Breast epithelium (tissue), 4 donors: ENCODE measurements at regions of chr17 and their contacts with region 1.

Region 1: DNA sequence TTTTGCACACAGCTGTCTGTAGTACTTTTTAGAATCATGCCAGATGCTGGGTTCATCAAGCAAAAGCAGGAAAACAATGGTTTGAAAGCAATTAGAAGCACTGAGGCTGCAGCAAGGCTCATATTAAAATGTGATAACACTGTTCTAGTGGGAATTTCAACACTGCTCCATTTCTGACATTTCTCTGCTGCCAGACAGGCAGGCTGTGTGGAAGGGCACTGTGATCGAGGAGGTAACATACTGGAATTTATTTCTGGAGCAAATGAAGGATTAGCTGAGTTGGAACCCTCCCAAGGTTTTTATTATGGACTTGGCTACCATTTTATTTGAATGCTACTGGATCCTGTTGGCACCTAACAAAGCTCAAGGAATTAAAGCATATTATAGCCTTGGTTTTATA is 66.9 kb downstream of the SKAP1 start:
- DNase-seq: no peak
- H3K4me3 ChIP-seq: no peak overlapping the region
- H3K27ac ChIP-seq: no peak overlapping the region
- H3K4me1 ChIP-seq: no peaks in the 10 kb centered on the region
- H3K27me3 ChIP-seq: peaks cover 0 to 18% of the 10 kb centered on the region in 2 donors
- CTCF ChIP-seq: no peak
- POLR2A ChIP-seq: no peak

Region 2: GRCh38 chr17:48374650-48375230 is 11.6 kb after region 1 on chr17:
- intact Hi-C with region 1: no loop called
- DNase-seq: no peak
- H3K4me3 ChIP-seq: no peak overlapping the region
- H3K27ac ChIP-seq: no peak overlapping the region
- H3K4me1 ChIP-seq: no peaks in the 10 kb centered on the region
- H3K27me3 ChIP-seq: peaks cover 0 to 15% of the 10 kb centered on the region in 2 donors
- CTCF ChIP-seq: peak in 2 of 3 donors; percentile 16 to 19
- POLR2A ChIP-seq: no peak

Region 3: GRCh38 chr17:48413613-48414405 is 50.6 kb after region 1 on chr17:
- intact Hi-C with region 1: loop called (anchors 10 kb)
- DNase-seq: no peak
- H3K4me3 ChIP-seq: no peak overlapping the region
- H3K27ac ChIP-seq: no peak overlapping the region
- H3K4me1 ChIP-seq: no peaks in the 10 kb centered on the region
- H3K27me3 ChIP-seq: peaks cover 0 to 9% of the 10 kb centered on the region in 2 donors
- CTCF ChIP-seq: no peak
- POLR2A ChIP-seq: no peak